ENCODE measurements at regions of chr1 and their contacts with region 1.

Region 1: DNA sequence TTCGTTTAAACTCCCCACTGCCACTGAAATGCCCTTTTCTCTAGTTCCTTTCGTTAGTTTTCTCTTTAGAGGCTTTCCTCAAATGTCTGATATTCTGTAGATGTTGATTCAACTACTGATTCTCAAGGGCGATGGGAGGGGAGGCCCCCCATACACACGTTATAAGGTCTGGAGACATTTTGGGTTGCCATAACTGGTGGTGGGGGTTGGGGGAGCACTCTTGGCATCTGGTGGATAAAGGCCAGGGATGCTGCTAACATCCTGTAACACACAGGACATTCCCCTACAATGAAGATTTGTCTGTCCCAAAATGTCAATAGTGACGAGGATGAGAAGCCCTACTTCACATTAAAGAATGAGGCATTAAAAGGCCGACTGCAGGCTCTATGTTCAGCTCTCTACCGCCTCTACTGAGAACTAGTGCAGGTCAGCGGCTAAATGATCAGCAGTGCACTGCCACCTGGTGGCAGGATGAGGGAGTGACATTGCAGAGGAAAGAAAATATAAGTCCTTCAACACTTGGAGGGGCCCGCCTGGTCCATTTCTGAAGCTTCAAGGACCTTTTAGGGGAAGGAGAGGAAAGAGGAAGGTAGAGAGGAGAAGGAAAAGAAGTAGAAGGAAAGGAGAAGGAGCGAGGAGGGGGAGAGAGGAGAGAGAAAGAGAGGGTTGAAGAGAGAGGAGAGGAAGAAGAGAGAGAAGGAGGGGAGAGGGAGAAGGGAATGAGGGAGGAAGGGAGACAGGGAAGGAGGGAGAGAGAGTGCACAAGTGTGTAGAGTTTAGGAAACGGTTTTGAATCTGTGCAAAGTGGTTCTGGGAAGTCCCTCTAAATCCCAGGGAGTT is 29.4 kb downstream of the ALG14 start:
- DNase-seq: peak; percentile 67 to 77
- H3K4me3 ChIP-seq: no peak overlapping the region
- H3K4me3 Mint-ChIP-seq: no peak overlapping the region
- H3K27ac Mint-ChIP-seq: no peak overlapping the region
- H3K4me1 ChIP-seq: no peaks in the 10 kb centered on the region; the same call in 1 of the 2 replicates
- H3K4me1 Mint-ChIP-seq: peaks cover 6% of the 10 kb centered on the region
- H3K27me3 ChIP-seq: no peaks in the 10 kb centered on the region
- H3K27me3 Mint-ChIP-seq: no peaks in the 10 kb centered on the region
- CTCF ChIP-seq: peak; percentile 87 to 88

Region 2: DNA sequence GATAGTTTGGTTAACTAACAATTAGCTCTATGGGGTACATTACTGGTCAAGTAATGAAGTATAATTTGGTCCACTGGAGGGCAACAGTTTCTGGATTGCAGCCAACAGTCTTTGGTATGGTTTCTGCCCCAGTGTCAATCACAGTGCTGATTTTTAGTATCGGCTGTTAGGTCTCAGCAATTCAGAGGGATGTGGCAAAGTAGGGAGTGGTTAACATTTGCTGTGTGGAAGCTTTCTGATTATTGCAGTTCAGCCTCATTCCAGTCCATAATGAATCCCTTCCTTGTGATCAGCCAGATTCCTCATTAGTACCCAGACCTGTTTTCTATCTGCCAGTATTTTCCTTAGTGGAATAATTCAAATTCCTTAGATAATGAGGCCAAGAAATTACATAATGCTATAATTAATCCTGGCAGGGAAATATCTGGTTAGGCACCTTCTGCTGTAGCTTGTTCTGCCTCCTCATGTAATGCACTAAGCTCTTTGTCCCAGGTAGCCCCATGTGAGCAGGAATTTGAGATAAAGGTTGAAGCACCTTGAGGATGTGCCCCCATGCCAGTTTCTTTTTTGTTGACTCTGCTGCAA is 515.8 kb before region 1 on chr1:
- CTCF ChIA-PET with region 1: no interaction called
- POLR2A ChIA-PET with region 1: no interaction called
- intact Hi-C with region 1: loop called (anchors 5 kb)
- DNase-seq: peak; percentile 47 to 51
- H3K4me3 ChIP-seq: no peak overlapping the region
- H3K4me3 Mint-ChIP-seq: no peak overlapping the region
- H3K27ac Mint-ChIP-seq: peak overlapping the region; percentile 33
- H3K4me1 ChIP-seq: peaks cover 36% of the 10 kb centered on the region
- H3K4me1 Mint-ChIP-seq: peaks cover 45% of the 10 kb centered on the region
- H3K27me3 ChIP-seq: no peaks in the 10 kb centered on the region
- H3K27me3 Mint-ChIP-seq: no peaks in the 10 kb centered on the region
- CTCF ChIP-seq: peak in 1 of 2 experiments; percentile 23

Region 3: GRCh38 chr1:94819941-94820746 is 223.2 kb before region 1 on chr1 and contains the start of gene SLC44A3:
- CTCF ChIA-PET with region 1: interaction called, 8 read pairs
- POLR2A ChIA-PET with region 1: no interaction called
- intact Hi-C with region 1: loop called (anchors 1 kb)
- DNase-seq: peak; percentile 70 to 78
- H3K4me3 ChIP-seq: peak within 1 kb of the TSS; percentile 81
- H3K4me3 Mint-ChIP-seq: peak within 1 kb of the TSS; percentile 78
- H3K27ac Mint-ChIP-seq: peak within 1 kb of the TSS; percentile 85
- H3K4me1 ChIP-seq: peaks cover 13% of the 10 kb centered on the region
- H3K4me1 Mint-ChIP-seq: peaks cover 5% of the 10 kb centered on the region
- H3K27me3 ChIP-seq: no peaks in the 10 kb centered on the region
- H3K27me3 Mint-ChIP-seq: no peaks in the 10 kb centered on the region
- CTCF ChIP-seq: no peak
- total RNA-seq, gene SLC44A3: 16.9 and 23.7 TPM in 2 replicates

Region 4: DNA sequence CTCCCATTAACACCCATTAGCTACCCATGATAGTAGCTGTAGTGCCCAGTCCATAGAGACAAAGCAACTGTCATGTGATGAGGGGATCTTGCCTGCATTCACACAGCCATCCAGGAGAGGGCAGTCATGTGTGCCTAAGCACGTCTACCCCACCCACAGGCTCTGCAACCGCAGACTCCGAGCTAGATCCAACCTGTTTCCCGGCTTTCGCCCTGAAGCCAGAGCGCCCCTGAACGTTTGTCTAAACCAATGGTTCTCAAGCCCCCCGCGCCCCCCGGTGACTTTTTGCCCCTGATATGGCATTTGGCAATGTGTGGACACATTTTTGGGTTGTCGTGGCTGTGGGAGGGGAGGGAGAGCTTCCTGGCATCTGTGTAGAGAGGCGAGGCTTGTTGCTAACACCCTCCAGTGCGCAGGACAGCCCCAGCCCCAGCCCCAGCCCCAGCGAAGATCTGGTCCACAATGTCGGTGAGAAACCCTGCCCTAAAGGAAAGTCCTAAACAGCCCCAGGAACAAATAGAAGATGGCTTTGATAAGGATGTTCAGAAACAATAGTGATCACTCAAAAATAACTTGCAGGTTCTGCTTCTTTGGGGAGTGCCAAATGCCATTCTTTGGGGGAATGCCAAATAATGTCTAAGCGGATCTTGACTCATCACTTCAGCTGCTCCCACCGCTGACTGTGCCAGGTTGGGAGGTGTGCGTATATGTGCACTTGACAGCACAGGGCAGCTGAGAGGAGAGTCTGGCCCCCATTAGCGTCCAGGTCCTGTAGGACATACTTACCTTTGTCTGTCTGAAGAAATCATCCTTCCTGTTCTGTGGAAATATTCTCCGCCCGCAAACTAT is 188.7 kb before region 1 on chr1:
- CTCF ChIA-PET with region 1: interaction called, 68 read pairs
- POLR2A ChIA-PET with region 1: interaction called, 3 read pairs
- intact Hi-C with region 1: loop called (anchors 1 kb)
- DNase-seq: peak; percentile 72 to 78
- H3K4me3 ChIP-seq: no peak overlapping the region
- H3K4me3 Mint-ChIP-seq: no peak overlapping the region
- H3K27ac Mint-ChIP-seq: no peak overlapping the region
- H3K4me1 ChIP-seq: peaks cover 9% of the 10 kb centered on the region
- H3K4me1 Mint-ChIP-seq: no peaks in the 10 kb centered on the region
- H3K27me3 ChIP-seq: no peaks in the 10 kb centered on the region
- H3K27me3 Mint-ChIP-seq: no peaks in the 10 kb centered on the region
- CTCF ChIP-seq: peak; percentile 55 to 71

Region 5: DNA sequence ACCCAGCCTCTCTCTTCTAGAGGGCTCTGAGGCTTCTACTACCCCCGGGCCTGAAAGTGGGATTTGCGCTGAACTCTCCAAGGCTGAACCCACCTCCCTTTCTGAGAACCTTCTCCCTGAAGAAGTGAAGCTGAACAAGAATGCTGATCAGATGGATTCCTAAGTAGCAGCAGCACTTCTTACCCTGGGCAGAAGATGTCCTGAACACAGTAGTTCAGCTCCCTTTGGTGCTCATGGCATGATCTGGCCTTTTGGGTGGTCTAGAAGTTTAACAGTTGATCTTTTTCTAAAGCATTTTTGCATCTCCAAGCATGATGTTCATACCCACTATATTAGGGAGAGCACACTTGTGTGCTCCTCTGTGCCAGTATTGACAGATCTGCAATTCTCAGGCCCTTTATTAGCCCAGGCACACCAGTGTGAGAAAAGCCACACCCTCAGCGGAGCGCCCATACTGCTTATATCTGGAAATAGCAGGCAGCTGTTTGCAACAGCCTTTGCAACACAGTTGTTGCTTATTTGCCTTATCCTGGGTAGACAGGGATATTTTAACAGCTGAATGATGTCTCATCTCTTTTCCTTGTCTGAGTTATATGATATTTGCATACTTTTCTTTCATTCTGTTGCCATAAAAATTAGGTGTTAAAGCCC is 150.6 kb before region 1 on chr1:
- CTCF ChIA-PET with region 1: interaction called, 5 read pairs
- POLR2A ChIA-PET with region 1: no interaction called
- intact Hi-C with region 1: loop called (anchors 2 kb)
- DNase-seq: no peak
- H3K4me3 ChIP-seq: no peak overlapping the region
- H3K4me3 Mint-ChIP-seq: no peak overlapping the region
- H3K27ac Mint-ChIP-seq: no peak overlapping the region
- H3K4me1 ChIP-seq: peaks cover 6% of the 10 kb centered on the region; the same call in 1 of the 2 replicates
- H3K4me1 Mint-ChIP-seq: peaks cover 14% of the 10 kb centered on the region
- H3K27me3 ChIP-seq: no peaks in the 10 kb centered on the region
- H3K27me3 Mint-ChIP-seq: no peaks in the 10 kb centered on the region
- CTCF ChIP-seq: no peak

Region 6: GRCh38 chr1:94926915-94927404 is 116.4 kb before region 1 on chr1 and contains the start of gene CNN3:
- CTCF ChIA-PET with region 1: interaction called, 15 read pairs
- POLR2A ChIA-PET with region 1: interaction called, 3 read pairs
- intact Hi-C with region 1: loop called (anchors 1 kb)
- DNase-seq: peak; percentile 91 to 94
- H3K4me3 ChIP-seq: peak within 1 kb of the TSS; percentile 88
- H3K4me3 Mint-ChIP-seq: peak within 1 kb of the TSS; percentile 88
- H3K27ac Mint-ChIP-seq: peak within 1 kb of the TSS; percentile 92
- H3K4me1 ChIP-seq: peaks cover 19% of the 10 kb centered on the region
- H3K4me1 Mint-ChIP-seq: peaks cover 7% of the 10 kb centered on the region
- H3K27me3 ChIP-seq: no peaks in the 10 kb centered on the region
- H3K27me3 Mint-ChIP-seq: no peaks in the 10 kb centered on the region
- CTCF ChIP-seq: no peak
- total RNA-seq, gene CNN3: 286 and 329 TPM in 2 replicates

Region 7: DNA sequence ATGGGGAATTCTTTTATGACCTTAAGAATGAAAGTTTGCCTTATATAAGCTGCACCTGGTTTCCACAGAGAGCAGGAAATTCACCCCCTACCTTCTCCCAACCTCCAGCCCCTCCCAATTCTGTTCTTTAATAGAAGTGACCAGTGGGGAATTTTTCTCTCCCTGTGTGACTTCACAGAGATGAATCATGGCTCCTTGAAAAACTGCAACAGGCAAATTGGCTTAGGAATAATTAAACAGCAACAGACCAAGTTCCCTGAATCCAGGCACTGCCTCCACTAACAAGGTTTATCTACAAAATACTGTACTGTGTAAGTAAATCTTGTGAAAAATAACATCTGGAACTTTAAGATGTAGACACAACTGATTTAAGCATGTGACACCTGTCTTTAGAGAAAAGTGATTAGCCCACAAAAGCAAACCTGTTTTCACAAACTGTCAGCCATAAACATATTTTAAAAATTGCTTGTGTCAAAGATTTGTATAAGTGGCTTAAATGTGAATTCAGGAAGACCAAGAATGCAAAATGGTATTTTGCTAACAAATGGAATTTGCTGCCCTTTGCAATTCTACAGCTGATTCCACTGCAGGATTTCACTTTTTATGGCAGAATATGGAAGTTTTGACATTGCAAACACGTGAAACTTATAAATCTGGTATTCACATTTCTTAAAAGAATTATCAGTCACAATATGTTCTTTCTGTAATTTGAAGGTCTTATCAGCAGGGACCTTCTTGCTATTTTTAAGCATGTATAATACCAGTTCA is 24.6 kb before region 1 on chr1:
- CTCF ChIA-PET with region 1: interaction called, 6 read pairs
- POLR2A ChIA-PET with region 1: no interaction called
- intact Hi-C with region 1: loop called (anchors 2 kb)
- DNase-seq: no peak
- H3K4me3 ChIP-seq: no peak overlapping the region
- H3K4me3 Mint-ChIP-seq: no peak overlapping the region
- H3K27ac Mint-ChIP-seq: no peak overlapping the region
- H3K4me1 ChIP-seq: peaks cover 18% of the 10 kb centered on the region
- H3K4me1 Mint-ChIP-seq: peaks cover 11% of the 10 kb centered on the region
- H3K27me3 ChIP-seq: no peaks in the 10 kb centered on the region
- H3K27me3 Mint-ChIP-seq: no peaks in the 10 kb centered on the region
- CTCF ChIP-seq: no peak

Measured in Caco-2 (cell line).